Activated CD4-positive, alpha-beta T cell treated with anti-CD3 and anti-CD28 coated beads for 36 hours (primary cell): ENCODE measurements at regions of chr7 and their contacts with region 1.

Region 1: DNA sequence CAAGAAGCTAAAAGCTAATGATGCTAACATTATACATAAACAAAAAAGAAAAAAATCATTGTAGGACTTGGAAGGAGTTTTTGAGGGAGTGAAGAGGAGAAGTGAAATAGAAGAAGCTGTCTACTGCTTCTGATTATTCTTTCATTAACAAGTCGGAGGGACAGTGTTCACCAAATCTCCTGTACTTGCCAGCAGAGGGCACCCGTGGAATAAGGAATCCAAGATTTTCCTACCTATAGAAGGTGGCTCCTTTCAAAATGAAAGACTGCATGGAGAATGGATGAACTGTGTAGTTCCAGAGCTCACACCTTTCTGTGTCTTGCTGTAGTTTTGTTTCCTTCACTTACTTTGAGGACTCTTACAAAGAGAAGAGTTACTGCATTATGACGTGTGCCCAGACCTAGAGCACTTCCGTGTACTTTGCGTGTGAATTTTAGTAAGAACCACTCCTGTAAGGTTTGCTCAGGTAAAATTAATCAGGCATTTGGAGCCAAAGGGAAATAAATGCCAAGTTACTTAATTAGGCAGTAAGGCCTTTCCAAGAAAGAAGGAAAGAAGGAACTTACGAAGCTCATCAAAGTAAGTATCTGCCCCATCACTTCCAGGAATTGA is 145.1 kb downstream of the SEMA3D start:
- DNase-seq: peak; percentile 47
- ATAC-seq: no peak
- H3K4me3 Mint-ChIP-seq: no peak overlapping the region
- H3K27ac Mint-ChIP-seq: no peak overlapping the region
- H3K4me1 Mint-ChIP-seq: no peaks in the 10 kb centered on the region
- H3K27me3 Mint-ChIP-seq: no peaks in the 10 kb centered on the region

Region 2: DNA sequence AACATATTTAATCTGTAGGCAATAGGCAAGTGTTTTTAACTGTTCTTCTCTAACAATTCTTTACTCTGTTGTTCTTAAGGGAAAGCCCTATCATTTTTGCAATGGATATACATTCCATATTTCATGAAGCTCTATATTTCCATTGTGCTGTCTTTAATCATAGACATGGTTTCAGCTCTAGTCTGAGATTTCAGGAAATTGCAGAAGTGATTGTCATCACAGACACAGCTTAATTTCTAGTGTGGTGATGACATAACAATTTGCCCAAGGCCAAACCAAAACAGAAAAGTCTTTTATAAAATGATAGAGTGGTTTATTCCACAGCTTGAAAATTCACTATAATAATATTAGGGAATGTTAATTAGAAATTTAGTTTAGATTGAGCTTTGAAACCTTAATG is 353.0 kb before region 1 on chr7:
- CTCF ChIA-PET with region 1: no interaction called
- POLR2A ChIA-PET with region 1: no interaction called
- intact Hi-C with region 1: no loop called
- DNase-seq: no peak
- ATAC-seq: no peak
- H3K4me3 Mint-ChIP-seq: no peak overlapping the region
- H3K27ac Mint-ChIP-seq: no peak overlapping the region
- H3K4me1 Mint-ChIP-seq: no peaks in the 10 kb centered on the region
- H3K27me3 Mint-ChIP-seq: no peaks in the 10 kb centered on the region

Region 3: GRCh38 chr7:85554236-85555178 is 512.8 kb after region 1 on chr7:
- CTCF ChIA-PET with region 1: interaction called, 5 read pairs
- POLR2A ChIA-PET with region 1: no interaction called
- intact Hi-C with region 1: loop called (anchors 1 to 2 kb)
- DNase-seq: peak; percentile 5
- ATAC-seq: no peak
- H3K4me3 Mint-ChIP-seq: no peak overlapping the region
- H3K27ac Mint-ChIP-seq: no peak overlapping the region
- H3K4me1 Mint-ChIP-seq: no peaks in the 10 kb centered on the region
- H3K27me3 Mint-ChIP-seq: no peaks in the 10 kb centered on the region

Region 4: DNA sequence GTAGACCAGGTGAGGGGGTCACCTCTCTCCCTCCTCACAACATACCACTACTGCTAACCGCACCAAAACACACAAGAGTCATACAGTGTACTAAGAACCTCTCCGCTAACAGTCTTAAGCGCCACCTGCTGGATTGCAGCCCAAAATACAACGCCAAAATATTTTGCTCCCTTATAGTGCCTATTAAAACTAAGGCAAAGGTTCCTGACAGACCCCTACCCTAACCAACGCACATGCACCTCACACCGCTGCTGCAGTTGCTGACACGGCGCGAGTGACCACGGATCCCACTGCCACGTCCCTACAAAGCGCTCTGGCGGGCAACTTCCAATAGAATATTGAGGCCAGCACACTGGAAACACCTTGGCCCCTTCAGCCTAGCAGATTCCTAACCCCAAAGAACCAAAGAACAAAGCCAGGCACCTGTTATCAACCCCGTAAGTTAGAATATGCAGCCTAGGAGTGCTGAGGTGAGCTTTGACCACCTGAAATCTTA is 708.8 kb after region 1 on chr7:
- CTCF ChIA-PET with region 1: no interaction called
- POLR2A ChIA-PET with region 1: no interaction called
- intact Hi-C with region 1: loop called in 1 of 2 experiments (anchors 2 kb)
- DNase-seq: peak; percentile 50
- ATAC-seq: peak; percentile 55
- H3K4me3 Mint-ChIP-seq: no peak overlapping the region
- H3K27ac Mint-ChIP-seq: no peak overlapping the region
- H3K4me1 Mint-ChIP-seq: no peaks in the 10 kb centered on the region
- H3K27me3 Mint-ChIP-seq: no peaks in the 10 kb centered on the region

Region 5: DNA sequence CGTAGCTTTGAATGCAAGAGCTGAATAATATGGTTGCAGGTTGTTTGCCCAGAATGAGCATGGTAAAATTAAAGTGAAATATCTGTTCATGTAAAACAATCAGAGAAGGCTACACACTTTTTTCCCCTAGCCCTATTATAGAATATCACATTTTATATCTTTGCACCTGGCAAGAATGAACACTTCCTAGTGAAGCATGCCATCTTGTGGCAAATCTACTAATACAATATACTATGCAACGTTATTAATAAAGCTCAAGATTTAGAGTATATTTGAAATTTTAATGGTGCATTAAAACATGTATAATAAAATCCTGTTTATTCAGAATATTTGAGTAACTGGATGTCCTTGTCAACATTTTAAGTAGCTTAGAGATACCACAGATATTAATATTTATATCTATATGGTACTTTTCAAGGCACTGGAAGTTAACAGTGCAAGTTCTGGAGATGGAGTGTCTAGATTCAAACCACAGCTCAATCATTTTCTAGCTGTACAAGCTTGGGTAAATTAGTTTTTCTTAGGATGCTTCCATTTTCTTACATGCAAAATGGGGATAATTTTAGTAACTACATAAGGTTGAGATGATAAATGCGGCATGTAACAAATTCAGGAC is 788.2 kb after region 1 on chr7:
- CTCF ChIA-PET with region 1: no interaction called
- POLR2A ChIA-PET with region 1: no interaction called
- intact Hi-C with region 1: loop called in 1 of 2 experiments (anchors 10 kb)
- DNase-seq: no peak
- ATAC-seq: no peak
- H3K4me3 Mint-ChIP-seq: no peak overlapping the region
- H3K27ac Mint-ChIP-seq: no peak overlapping the region
- H3K4me1 Mint-ChIP-seq: no peaks in the 10 kb centered on the region
- H3K27me3 Mint-ChIP-seq: no peaks in the 10 kb centered on the region